Naive thymus-derived CD4-positive, alpha-beta T cell (primary cell): ENCODE measurements at regions of chr12 and their contacts with region 1.

Region 1: GRCh38 chr12:2583091-2583497 is 211.7 kb upstream of the FKBP4 start:
- DNase-seq: peak in 7 of 9 donors; percentile 1 to 77 (median 26)
- ATAC-seq: peak; percentile 67
- H3K4me3 ChIP-seq: no peak overlapping the region
- H3K4me3 Mint-ChIP-seq: peak overlapping the region in 1 of 10 donors; percentile 16
- H3K27ac ChIP-seq: no peak overlapping the region
- H3K27ac Mint-ChIP-seq: no peak overlapping the region
- H3K4me1 ChIP-seq: no peaks in the 10 kb centered on the region
- H3K4me1 Mint-ChIP-seq: peaks cover 0 to 5% (median 3%) of the 10 kb centered on the region in 7 donors
- H3K27me3 ChIP-seq: peaks cover 0 to 4% of the 10 kb centered on the region in 2 donors
- H3K27me3 Mint-ChIP-seq: peaks cover 38 to 55% (median 42%) of the 10 kb centered on the region in 5 donors

Region 2: DNA sequence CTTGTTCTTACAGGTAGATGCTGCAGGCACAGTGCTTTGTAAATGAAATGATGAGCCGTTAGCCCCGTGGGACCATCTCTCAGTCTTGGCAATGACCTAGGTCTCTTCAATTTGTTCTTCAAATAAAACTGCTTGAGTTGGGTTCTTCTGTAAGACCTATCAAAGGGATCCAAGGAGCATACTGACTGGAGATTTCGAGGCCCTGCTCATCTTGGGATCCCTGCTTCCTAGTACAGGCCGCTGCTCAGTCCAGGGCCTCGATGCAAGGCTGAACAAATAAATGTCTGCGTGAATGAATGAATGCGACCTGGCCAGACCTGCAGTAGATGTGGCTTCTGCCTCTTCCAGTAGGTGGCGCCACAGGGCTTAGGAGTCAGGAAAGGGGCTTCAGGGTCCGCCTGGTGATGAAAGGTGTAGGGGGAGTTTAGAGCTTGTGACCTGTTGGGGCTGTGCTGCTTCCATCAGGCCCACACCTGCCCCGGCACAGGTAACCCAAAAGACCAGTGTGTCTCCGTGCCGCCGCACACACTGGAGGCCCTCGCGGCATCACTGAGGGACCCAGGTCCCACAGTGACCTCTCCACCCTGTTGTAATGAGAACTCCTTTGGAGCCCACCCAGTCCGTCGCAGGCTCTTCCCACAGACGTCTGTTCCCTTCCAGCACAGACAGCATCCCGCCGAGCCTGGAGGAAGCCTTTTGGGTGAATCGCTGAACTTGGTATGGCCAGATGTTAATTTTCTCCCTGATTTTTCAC is 525.9 kb before region 1 on chr12:
- CTCF ChIA-PET with region 1: interaction called, 3 read pairs
- POLR2A ChIA-PET with region 1: no interaction called
- intact Hi-C with region 1: loop called (anchors 5 kb)
- DNase-seq: peak in 1 of 9 donors; percentile 34
- ATAC-seq: no peak
- H3K4me3 ChIP-seq: no peak overlapping the region
- H3K4me3 Mint-ChIP-seq: no peak overlapping the region
- H3K27ac ChIP-seq: no peak overlapping the region
- H3K27ac Mint-ChIP-seq: no peak overlapping the region
- H3K4me1 ChIP-seq: no peaks in the 10 kb centered on the region
- H3K4me1 Mint-ChIP-seq: peaks cover 6 to 13% (median 10%) of the 10 kb centered on the region in 7 donors
- H3K27me3 ChIP-seq: no peaks in the 10 kb centered on the region
- H3K27me3 Mint-ChIP-seq: peaks cover 30 to 70% (median 37%) of the 10 kb centered on the region in 5 donors

Region 3: DNA sequence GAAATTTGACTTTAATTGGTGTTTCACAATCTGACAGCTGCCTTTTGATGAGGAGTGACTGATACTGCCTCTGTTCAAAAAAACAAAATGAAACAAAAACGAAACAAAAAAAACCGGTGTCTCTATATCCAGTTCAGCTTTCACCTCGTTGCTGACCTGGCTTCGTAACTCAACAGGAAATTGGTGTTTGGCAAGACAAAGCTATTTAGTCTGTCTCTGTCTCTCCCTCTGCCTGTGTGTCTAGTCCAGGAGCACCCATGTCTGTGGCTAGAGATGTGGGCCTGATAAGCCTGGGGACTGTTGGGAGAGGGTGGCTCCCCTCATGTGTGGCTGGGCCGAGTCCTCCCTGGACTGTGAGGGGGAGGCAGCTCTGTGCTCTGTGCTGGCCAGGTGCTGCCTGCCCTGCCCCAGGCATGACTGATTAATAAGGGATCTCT is 519.0 kb before region 1 on chr12:
- CTCF ChIA-PET with region 1: no interaction called
- POLR2A ChIA-PET with region 1: no interaction called
- intact Hi-C with region 1: loop called (anchors 5 kb)
- DNase-seq: peak in 6 of 9 donors; percentile 10 to 42 (median 29)
- ATAC-seq: peak; percentile 57
- H3K4me3 ChIP-seq: peak overlapping the region; percentile 35
- H3K4me3 Mint-ChIP-seq: peak overlapping the region; percentile 68 to 82 (median 79)
- H3K27ac ChIP-seq: peak overlapping the region; percentile 53
- H3K27ac Mint-ChIP-seq: peak overlapping the region; percentile 85 to 94 (median 89)
- H3K4me1 ChIP-seq: peaks cover 5 to 6% of the 10 kb centered on the region in 2 donors
- H3K4me1 Mint-ChIP-seq: peaks cover 11 to 24% (median 15%) of the 10 kb centered on the region in 7 donors
- H3K27me3 ChIP-seq: no peaks in the 10 kb centered on the region
- H3K27me3 Mint-ChIP-seq: peaks cover 8 to 28% (median 21%) of the 10 kb centered on the region in 5 donors

Region 4: DNA sequence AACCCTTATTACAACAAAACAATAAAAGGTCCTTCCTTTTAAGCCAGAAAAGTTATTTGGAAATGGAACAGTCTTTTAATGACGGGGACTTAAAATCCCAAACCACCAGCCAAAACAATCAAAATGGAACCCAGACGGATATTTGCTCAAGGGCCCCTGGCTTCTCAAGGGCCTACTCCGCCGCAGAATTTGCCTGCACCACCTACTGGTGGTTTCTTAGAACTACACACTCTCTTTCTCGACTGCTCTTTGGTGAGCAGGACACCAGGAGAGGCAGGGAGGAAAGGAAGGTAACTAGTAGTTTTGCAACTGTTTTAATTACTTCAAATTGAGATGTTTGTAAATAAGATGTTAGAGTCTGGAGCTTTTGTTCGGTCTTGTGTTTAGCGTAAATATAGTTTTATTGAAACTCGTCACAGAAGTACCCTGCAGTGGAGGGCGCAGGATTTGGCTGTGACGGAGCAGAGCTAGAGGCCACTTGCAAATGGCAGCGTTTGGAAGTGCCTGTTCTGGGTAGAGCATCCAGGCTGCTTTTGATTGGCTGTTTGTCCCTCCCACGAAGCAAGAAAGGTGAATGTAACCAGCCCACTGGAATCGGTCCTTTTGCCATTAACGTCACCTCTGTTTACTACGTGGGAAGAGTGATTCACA is 291.8 kb before region 1 on chr12:
- CTCF ChIA-PET with region 1: no interaction called
- POLR2A ChIA-PET with region 1: no interaction called
- intact Hi-C with region 1: loop called in 1 of 2 experiments (anchors 5 kb)
- DNase-seq: peak in 6 of 9 donors; percentile 12 to 47 (median 26)
- ATAC-seq: no peak
- H3K4me3 ChIP-seq: no peak overlapping the region
- H3K4me3 Mint-ChIP-seq: peak overlapping the region in 1 of 10 donors; percentile 26
- H3K27ac ChIP-seq: no peak overlapping the region
- H3K27ac Mint-ChIP-seq: no peak overlapping the region
- H3K4me1 ChIP-seq: peaks cover 0 to 5% of the 10 kb centered on the region in 2 donors
- H3K4me1 Mint-ChIP-seq: peaks cover 8 to 16% (median 14%) of the 10 kb centered on the region in 7 donors
- H3K27me3 ChIP-seq: no peaks in the 10 kb centered on the region
- H3K27me3 Mint-ChIP-seq: peaks cover 0 to 25% (median 8%) of the 10 kb centered on the region in 5 donors

Region 5: GRCh38 chr12:2324387-2324786 is 258.7 kb before region 1 on chr12:
- CTCF ChIA-PET with region 1: no interaction called
- POLR2A ChIA-PET with region 1: no interaction called
- intact Hi-C with region 1: no loop called
- DNase-seq: no peak
- ATAC-seq: no peak
- H3K4me3 ChIP-seq: no peak overlapping the region
- H3K4me3 Mint-ChIP-seq: no peak overlapping the region
- H3K27ac ChIP-seq: no peak overlapping the region
- H3K27ac Mint-ChIP-seq: no peak overlapping the region
- H3K4me1 ChIP-seq: no peaks in the 10 kb centered on the region
- H3K4me1 Mint-ChIP-seq: peaks cover 0 to 4% (median 0%) of the 10 kb centered on the region in 7 donors
- H3K27me3 ChIP-seq: no peaks in the 10 kb centered on the region
- H3K27me3 Mint-ChIP-seq: peaks cover 25 to 39% (median 33%) of the 10 kb centered on the region in 5 donors

Region 6: GRCh38 chr12:2783936-2784600 is 201.0 kb after region 1 on chr12:
- CTCF ChIA-PET with region 1: no interaction called
- POLR2A ChIA-PET with region 1: no interaction called
- intact Hi-C with region 1: no loop called
- DNase-seq: peak in 8 of 9 donors; percentile 12 to 59 (median 42)
- ATAC-seq: peak; percentile 88
- H3K4me3 ChIP-seq: peak overlapping the region; percentile 27
- H3K4me3 Mint-ChIP-seq: peak overlapping the region; percentile 70 to 87 (median 78)
- H3K27ac ChIP-seq: no peak overlapping the region
- H3K27ac Mint-ChIP-seq: peak overlapping the region in 1 of 9 donors; percentile 66
- H3K4me1 ChIP-seq: peaks cover 0 to 6% of the 10 kb centered on the region in 2 donors
- H3K4me1 Mint-ChIP-seq: peaks cover 4 to 13% (median 9%) of the 10 kb centered on the region in 7 donors
- H3K27me3 ChIP-seq: no peaks in the 10 kb centered on the region
- H3K27me3 Mint-ChIP-seq: peaks cover 5 to 46% (median 15%) of the 10 kb centered on the region in 5 donors